GM18951 (cell line): ENCODE measurements at regions of chr10 and their contacts with region 1.

Region 1: DNA sequence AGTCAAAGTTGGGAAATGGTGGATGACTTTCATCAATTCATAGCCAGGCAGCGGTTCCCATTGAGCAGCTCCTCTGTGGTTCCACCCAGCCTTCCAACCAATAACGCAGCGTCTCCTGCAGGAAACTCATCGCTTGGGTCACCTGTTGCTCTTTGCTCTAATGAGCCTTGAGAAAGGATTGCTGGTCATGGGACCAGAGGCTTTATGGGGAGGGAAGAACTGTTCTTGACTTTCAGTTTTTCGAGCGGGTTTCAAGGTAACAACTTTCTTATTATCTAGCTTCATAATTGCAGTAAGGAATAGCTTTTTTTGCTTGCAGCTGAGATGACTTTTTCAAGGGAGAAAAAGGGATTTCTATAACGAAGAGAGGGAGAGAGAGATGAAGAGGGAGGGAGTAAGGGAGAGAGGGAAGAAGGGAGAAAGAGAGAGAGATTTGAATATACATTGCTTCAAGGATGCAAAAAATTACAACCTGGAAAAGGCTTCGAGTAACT is 405 bp upstream of the ENTPD1 start:
- POLR2A ChIP-seq: no peak

Region 2: DNA sequence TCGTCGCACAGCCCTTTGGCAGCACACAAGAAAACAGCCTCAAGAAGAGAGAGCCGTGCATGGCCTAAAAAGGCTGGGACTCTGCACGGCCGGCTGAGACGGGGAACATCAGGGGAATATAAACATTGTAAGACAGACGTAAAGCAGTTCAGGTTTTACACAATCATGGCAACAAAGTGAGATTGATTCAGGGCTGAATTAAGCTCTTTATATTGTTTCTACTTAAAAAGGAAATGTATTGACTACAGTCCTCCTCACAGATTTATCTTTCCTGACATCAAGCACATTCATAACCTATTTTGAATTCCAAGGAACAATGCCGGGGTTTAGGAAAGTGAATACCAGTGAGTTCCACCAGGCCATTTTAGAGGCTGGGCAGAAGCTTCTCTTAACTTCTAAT is 219.5 kb before region 1 on chr10:
- in situ Hi-C with region 1: no loop called
- POLR2A ChIP-seq: no peak

Region 3: GRCh38 chr10:95832216-95833041 is 76.9 kb after region 1 on chr10:
- in situ Hi-C with region 1: loop called (anchors 10 kb)
- POLR2A ChIP-seq: peak; percentile 51

Region 4: GRCh38 chr10:96129387-96130325 is 374.1 kb after region 1 on chr10 and contains the start of gene ZNF518A:
- in situ Hi-C with region 1: loop called (anchors 10 kb)
- POLR2A ChIP-seq: peak; percentile 87

Region 5: DNA sequence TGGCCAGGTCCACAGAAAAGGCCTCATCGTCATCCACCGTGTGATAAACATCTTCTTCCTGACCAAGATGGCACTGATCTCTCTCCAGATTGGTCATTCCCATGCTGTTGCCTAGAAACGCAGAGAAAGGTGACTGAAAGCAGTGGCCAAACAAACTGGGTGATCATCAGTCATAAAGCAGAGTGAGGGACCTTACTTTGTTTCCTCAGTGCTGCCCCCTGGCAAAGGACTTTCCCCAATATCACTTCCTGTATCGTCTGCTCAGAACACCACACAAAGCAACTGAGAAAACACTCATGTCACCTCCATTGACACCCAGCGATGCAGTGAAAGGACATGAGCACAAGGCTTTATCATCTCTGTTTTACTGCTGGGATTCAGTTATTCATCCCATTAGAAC is 871.2 kb after region 1 on chr10:
- in situ Hi-C with region 1: no loop called
- POLR2A ChIP-seq: no peak